ENCODE measurements at regions of chr4 and their contacts with region 1.

Region 1: GRCh38 chr4:139656614-139657486 is 8.8 kb upstream of the MGST2 start:
- DNase-seq: peak; percentile 78
- ATAC-seq: peak; percentile 92
- H3K4me3 ChIP-seq: no peak overlapping the region
- H3K27ac ChIP-seq: peak overlapping the region; percentile 18; the same call in 1 of the 2 replicates
- H3K4me1 ChIP-seq: peaks cover 6% of the 10 kb centered on the region
- H3K27me3 ChIP-seq: no peaks in the 10 kb centered on the region
- CTCF ChIP-seq: peak; percentile 93
- POLR2A ChIP-seq: no peak
- RAD21 ChIP-seq: peak; percentile 52

Region 2: GRCh38 chr4:139416073-139416673 is 240.7 kb before region 1 on chr4:
- CTCF ChIA-PET with region 1: no interaction called
- POLR2A ChIA-PET with region 1: no interaction called
- dilution Hi-C with region 1: no loop called
- in situ Hi-C with region 1: no loop called
- intact Hi-C with region 1: no loop called
- DNase-seq: peak; percentile 67
- ATAC-seq: peak; percentile 63
- H3K4me3 ChIP-seq: no peak overlapping the region
- H3K27ac ChIP-seq: no peak overlapping the region
- H3K4me1 ChIP-seq: no peaks in the 10 kb centered on the region
- H3K27me3 ChIP-seq: no peaks in the 10 kb centered on the region
- CTCF ChIP-seq: peak; percentile 57
- POLR2A ChIP-seq: no peak
- RAD21 ChIP-seq: peak; percentile 43

Region 3: DNA sequence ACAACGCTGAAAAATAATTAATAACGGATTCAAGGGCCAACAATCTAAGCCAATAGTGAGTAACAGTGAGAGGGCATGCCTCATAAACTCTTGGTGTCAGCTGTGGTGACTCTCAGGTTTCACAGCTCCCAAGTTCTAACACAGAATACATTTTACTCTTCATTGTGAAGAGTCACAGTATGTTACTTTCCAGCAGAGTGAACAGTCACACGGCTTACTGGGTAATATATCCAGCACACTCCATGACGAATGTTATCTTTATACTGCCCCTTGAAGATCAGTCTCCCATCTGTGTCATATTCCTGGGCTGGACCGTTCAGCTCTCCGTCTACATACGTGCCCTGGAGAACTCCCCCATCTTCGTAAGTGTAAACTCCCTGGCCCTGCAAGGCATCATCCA is 123.9 kb before region 1 on chr4:
- CTCF ChIA-PET with region 1: no interaction called
- POLR2A ChIA-PET with region 1: no interaction called
- dilution Hi-C with region 1: no loop called
- in situ Hi-C with region 1: no loop called
- intact Hi-C with region 1: no loop called
- DNase-seq: peak; percentile 25
- ATAC-seq: no peak
- H3K4me3 ChIP-seq: no peak overlapping the region
- H3K27ac ChIP-seq: no peak overlapping the region
- H3K4me1 ChIP-seq: peaks cover 4% of the 10 kb centered on the region
- H3K27me3 ChIP-seq: no peaks in the 10 kb centered on the region
- CTCF ChIP-seq: no peak
- POLR2A ChIP-seq: no peak
- RAD21 ChIP-seq: no peak

Region 4: GRCh38 chr4:139603576-139604387 is 53.1 kb before region 1 on chr4:
- CTCF ChIA-PET with region 1: interaction called, 37 read pairs
- POLR2A ChIA-PET with region 1: no interaction called
- dilution Hi-C with region 1: no loop called
- in situ Hi-C with region 1: no loop called
- intact Hi-C with region 1: no loop called
- DNase-seq: peak; percentile 59
- ATAC-seq: peak; percentile 43
- H3K4me3 ChIP-seq: no peak overlapping the region
- H3K27ac ChIP-seq: no peak overlapping the region
- H3K4me1 ChIP-seq: peaks cover 5% of the 10 kb centered on the region; the same call in 1 of the 2 replicates
- H3K27me3 ChIP-seq: peaks cover 14% of the 10 kb centered on the region
- CTCF ChIP-seq: peak; percentile 60
- POLR2A ChIP-seq: no peak
- RAD21 ChIP-seq: peak; percentile 69

Region 5: GRCh38 chr4:140012688-140013486 is 356.0 kb after region 1 on chr4:
- CTCF ChIA-PET with region 1: interaction called, 4 read pairs
- POLR2A ChIA-PET with region 1: no interaction called
- dilution Hi-C with region 1: no loop called
- in situ Hi-C with region 1: no loop called
- intact Hi-C with region 1: loop called (anchors 1 kb)
- DNase-seq: peak; percentile 95
- ATAC-seq: peak; percentile 98
- H3K4me3 ChIP-seq: no peak overlapping the region
- H3K27ac ChIP-seq: no peak overlapping the region
- H3K4me1 ChIP-seq: peaks cover 4% of the 10 kb centered on the region
- H3K27me3 ChIP-seq: no peaks in the 10 kb centered on the region
- CTCF ChIP-seq: peak; percentile 91
- POLR2A ChIP-seq: no peak
- RAD21 ChIP-seq: peak; percentile 95

Region 6: GRCh38 chr4:140049024-140049848 is 392.4 kb after region 1 on chr4:
- CTCF ChIA-PET with region 1: no interaction called
- POLR2A ChIA-PET with region 1: no interaction called
- dilution Hi-C with region 1: no loop called
- in situ Hi-C with region 1: no loop called
- intact Hi-C with region 1: loop called (anchors 5 kb)
- DNase-seq: peak; percentile 57
- ATAC-seq: peak; percentile 55
- H3K4me3 ChIP-seq: peak overlapping the region; percentile 34
- H3K27ac ChIP-seq: peak overlapping the region; percentile 79
- H3K4me1 ChIP-seq: peaks cover 12% of the 10 kb centered on the region
- H3K27me3 ChIP-seq: no peaks in the 10 kb centered on the region
- CTCF ChIP-seq: no peak
- POLR2A ChIP-seq: no peak
- RAD21 ChIP-seq: no peak

Region 7: DNA sequence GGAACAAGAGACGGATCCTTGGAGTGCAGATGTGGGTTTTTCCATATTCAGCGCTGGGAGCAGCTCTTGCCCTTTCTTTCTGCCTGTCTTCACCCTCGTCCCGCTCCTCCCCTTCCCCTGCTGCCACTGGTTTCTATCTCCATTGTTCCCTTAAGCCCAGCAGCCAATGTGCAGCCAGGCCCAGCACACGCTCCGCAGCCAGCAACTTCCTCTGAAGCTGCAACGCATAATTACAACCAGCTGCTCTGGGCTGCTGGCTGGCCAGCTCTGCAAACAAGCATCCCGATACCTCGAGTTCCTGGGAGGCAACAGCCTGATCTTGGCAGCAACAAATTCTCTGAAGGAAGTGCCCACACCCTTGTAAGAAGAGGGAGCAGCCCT is 580.7 kb after region 1 on chr4:
- CTCF ChIA-PET with region 1: no interaction called
- POLR2A ChIA-PET with region 1: no interaction called
- dilution Hi-C with region 1: no loop called
- in situ Hi-C with region 1: no loop called
- intact Hi-C with region 1: loop called (anchors 5 kb)
- DNase-seq: peak; percentile 93
- ATAC-seq: peak; percentile 81
- H3K4me3 ChIP-seq: no peak overlapping the region
- H3K27ac ChIP-seq: peak overlapping the region; percentile 87
- H3K4me1 ChIP-seq: peaks cover 28% of the 10 kb centered on the region
- H3K27me3 ChIP-seq: no peaks in the 10 kb centered on the region
- CTCF ChIP-seq: no peak
- POLR2A ChIP-seq: no peak
- RAD21 ChIP-seq: 0 out of 2 replicates have a peak, but pooled peaks have one; percentile 11

Region 8: DNA sequence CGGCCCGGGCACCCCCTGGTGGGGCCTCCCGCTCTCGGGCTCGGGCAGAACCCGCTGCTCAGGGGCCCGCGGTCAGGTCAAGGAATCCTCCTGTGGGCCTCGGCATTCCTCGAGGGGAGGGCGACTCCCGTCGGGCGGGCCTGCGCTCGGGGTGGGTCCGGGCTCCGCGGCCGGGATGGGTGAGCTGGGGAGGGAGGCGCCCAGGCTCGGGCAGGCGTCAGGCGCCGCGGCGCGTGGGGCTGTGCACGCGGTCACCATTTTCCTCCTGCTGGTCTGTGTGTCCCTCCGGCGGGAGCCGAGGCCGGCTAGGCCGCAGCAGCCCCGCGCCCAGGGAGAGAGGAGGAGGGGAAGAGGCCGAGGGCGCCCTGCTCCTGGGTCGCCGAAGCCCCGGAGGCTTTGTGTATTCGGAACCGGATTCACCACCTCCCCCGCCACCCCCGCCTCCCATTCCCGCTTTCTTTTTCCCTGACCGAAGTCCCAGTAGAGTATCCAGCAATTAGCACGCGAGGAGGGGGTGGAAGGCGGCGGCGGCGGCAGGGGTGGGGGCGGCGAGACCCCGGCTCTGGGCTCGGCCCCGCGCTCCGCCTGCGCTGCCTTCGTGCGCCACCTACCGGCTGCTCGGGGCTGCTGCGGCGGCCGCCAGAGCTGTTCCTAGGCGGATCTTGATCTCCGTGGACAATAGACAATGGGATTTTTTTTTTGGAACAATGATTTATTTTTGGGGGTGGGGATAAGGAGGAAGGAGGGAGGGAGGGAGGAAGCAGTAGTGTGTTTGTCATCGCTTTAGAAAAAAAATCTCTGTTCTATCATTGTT is 596.1 kb after region 1 on chr4:
- CTCF ChIA-PET with region 1: no interaction called
- POLR2A ChIA-PET with region 1: no interaction called
- dilution Hi-C with region 1: no loop called
- in situ Hi-C with region 1: no loop called
- intact Hi-C with region 1: loop called (anchors 5 kb)
- DNase-seq: peak; percentile 56
- ATAC-seq: peak; percentile 84
- H3K4me3 ChIP-seq: peak overlapping the region; percentile 42
- H3K27ac ChIP-seq: peak overlapping the region; percentile 78
- H3K4me1 ChIP-seq: peaks cover 25% of the 10 kb centered on the region
- H3K27me3 ChIP-seq: no peaks in the 10 kb centered on the region
- CTCF ChIP-seq: peak; percentile 89
- POLR2A ChIP-seq: no peak
- RAD21 ChIP-seq: peak; percentile 88

Region 9: DNA sequence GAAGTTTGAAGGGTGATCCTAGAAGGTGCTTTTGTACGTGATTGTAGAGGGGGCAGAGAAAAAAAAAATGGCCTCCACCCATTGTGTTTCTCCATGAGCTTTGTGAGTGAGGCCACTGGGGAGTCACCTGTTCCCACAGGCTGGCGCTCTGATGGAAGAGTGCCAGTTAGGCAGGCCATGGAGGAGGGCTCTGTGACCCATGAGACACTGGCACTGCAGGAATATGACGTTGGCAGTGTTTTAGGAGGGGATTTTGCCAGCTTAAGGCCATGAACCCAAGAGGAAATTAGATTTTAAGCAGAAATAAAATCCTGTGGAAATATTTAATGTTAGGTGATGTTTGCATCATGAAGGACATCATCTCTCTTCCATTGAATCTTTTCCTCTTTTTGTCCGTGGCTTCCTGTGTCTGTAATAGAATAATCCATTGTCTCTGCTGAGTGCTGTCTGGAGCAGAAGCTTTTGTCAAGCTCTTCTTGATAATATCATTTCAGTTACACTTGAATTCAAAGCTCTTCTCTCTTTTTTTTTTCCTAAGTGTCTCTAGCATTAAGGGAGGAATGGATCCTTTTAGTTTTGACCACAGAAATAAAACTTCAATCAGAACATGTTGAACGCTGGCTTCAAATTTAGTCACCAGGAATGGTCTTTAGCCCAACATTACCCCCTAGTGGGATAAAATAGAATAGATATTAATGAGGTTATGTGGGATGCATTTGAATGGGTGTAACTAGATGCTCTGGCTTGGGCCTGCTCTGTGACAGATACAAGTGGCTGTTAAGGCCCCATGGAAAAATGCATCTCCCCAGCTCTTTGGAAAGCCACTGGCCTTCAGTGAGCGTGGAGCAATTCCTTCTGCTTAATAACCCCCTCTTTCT is 952.9 kb after region 1 on chr4:
- CTCF ChIA-PET with region 1: interaction called, 3 read pairs
- POLR2A ChIA-PET with region 1: no interaction called
- dilution Hi-C with region 1: no loop called
- in situ Hi-C with region 1: no loop called
- intact Hi-C with region 1: loop called (anchors 5 kb)
- DNase-seq: peak; percentile 55
- ATAC-seq: peak; percentile 92
- H3K4me3 ChIP-seq: no peak overlapping the region
- H3K27ac ChIP-seq: no peak overlapping the region
- H3K4me1 ChIP-seq: no peaks in the 10 kb centered on the region
- H3K27me3 ChIP-seq: peaks cover 7% of the 10 kb centered on the region
- CTCF ChIP-seq: peak; percentile 67
- POLR2A ChIP-seq: no peak
- RAD21 ChIP-seq: peak; percentile 71

Measured in IMR-90 (cell line).